ENCODE measurements at regions of chr9 and their contacts with region 1.

Region 1: DNA sequence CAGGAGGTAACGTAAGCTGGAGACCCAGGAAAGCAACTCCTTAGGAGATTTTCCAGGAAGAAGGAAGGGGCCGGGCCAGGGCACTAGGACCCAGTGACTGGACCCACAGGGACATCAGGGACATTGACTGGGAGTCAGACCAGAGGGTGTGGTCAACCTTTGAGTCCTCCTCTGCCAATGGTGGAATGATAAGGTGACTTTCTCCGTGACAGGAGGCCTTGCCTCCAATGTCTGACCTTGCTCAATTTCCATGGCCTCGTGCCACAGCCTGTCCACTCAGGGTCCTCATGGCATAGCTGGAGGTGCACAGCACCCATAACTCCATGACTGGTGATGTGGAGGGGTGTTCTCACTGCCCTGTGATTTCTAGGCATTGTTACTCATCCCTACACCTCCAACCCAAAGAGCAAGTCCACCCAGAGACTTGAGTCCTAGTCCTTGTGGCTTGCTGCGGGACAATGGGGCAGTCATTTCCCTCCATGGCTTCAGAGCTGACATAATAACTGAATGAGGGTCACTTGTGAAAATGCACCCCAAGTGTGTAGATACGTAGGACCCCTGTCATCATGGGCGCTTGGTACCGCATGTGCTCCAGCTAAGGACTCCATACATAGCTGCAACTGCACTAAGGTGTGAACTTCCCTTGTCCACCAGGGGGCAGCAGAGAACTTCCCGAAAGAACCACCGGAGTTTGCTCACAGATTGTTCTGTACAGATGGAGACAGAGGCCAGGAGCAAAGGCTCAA is 4.1 kb upstream of the AMBP start:
- DNase-seq: peak; percentile 79 to 85 (median 82)
- ATAC-seq: peak; percentile 95
- H3K4me3 ChIP-seq: no peak overlapping the region
- H3K27ac ChIP-seq: no peak overlapping the region
- H3K4me1 ChIP-seq: peaks cover 5 to 6% of the 10 kb centered on the region in 2 experiments; a peak in 4 of 5 replicates
- H3K27me3 ChIP-seq: peaks cover 7 to 54% of the 10 kb centered on the region in 2 experiments; a peak in 4 of 5 replicates
- CTCF ChIP-seq: peak; percentile 82 to 93 (median 89)
- EP300 ChIP-seq: no peak
- POLR2A ChIP-seq: no peak
- RAD21 ChIP-seq: peak; percentile 56 to 86

Region 2: GRCh38 chr9:114282926-114283325 is 200.7 kb after region 1 on chr9:
- CTCF ChIA-PET with region 1: no interaction called
- POLR2A ChIA-PET with region 1: no interaction called
- in situ Hi-C with region 1: loop called (anchors 10 kb)
- intact Hi-C with region 1: no loop called
- DNase-seq: no peak
- ATAC-seq: peak; percentile 66
- H3K4me3 ChIP-seq: no peak overlapping the region
- H3K27ac ChIP-seq: no peak overlapping the region
- H3K4me1 ChIP-seq: peaks cover 0 to 4% of the 10 kb centered on the region in 2 experiments; a peak in 2 of 5 replicates
- H3K27me3 ChIP-seq: peaks cover 15 to 64% of the 10 kb centered on the region in 2 experiments
- CTCF ChIP-seq: no peak
- EP300 ChIP-seq: no peak
- POLR2A ChIP-seq: no peak
- RAD21 ChIP-seq: no peak